GM12878 (cell line): ENCODE measurements at regions of chr2 and their contacts with region 1.

Region 1: GRCh38 chr2:64523666-64524603 is at the start of gene AFTPH:
- DNase-seq: peak; percentile 98
- ATAC-seq: peak; percentile 86
- H3K4me3 ChIP-seq: peak within 1 kb of the TSS; percentile 95
- H3K27ac ChIP-seq: peak within 1 kb of the TSS; percentile 94
- H3K4me1 ChIP-seq: peaks cover 11% of the 10 kb centered on the region
- H3K27me3 ChIP-seq: no peaks in the 10 kb centered on the region
- CTCF ChIP-seq: no peak
- EP300 ChIP-seq: peak in 1 of 2 experiments; percentile 53; a peak in 2 of 4 replicates
- POLR2A ChIP-seq: peak; percentile 84
- RAD21 ChIP-seq: no peak
- polyA plus RNA-seq, gene AFTPH: 25.6 to 38.7 TPM

Region 2: DNA sequence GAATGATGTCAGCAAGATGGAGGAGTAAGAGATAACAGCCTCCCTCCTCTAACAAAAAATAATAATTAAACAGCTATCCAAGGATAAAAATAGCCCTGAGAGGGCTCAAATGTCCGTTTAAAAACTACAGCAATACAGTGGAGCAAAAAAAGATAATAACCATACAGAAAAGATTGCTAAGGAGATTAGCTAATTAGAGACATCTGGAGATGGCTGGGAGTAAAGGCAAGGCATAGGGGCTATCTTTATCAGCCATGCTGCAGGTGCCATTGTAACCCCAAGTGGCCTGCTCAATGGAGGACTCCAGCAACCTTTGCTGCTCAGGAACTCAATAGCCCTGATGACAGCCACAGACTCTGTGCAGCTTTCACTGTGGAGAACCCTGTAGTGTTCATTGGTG is 892.4 kb before region 1 on chr2:
- CTCF ChIA-PET with region 1: no interaction called
- POLR2A ChIA-PET with region 1: no interaction called
- RAD21 ChIA-PET with region 1: no interaction called
- SMC1A ChIA-PET with region 1: no interaction called
- in situ Hi-C with region 1: no loop called
- intact Hi-C with region 1: no loop called
- DNase-seq: no peak
- ATAC-seq: no peak
- H3K4me3 ChIP-seq: no peak overlapping the region
- H3K27ac ChIP-seq: no peak overlapping the region
- H3K4me1 ChIP-seq: peaks cover 3% of the 10 kb centered on the region; the same call in 1 of the 2 replicates
- H3K27me3 ChIP-seq: no peaks in the 10 kb centered on the region
- CTCF ChIP-seq: no peak
- EP300 ChIP-seq: no peak
- POLR2A ChIP-seq: no peak
- RAD21 ChIP-seq: no peak

Region 3: GRCh38 chr2:64052468-64053241 is 471.3 kb before region 1 on chr2:
- CTCF ChIA-PET with region 1: interaction called, 10 read pairs
- POLR2A ChIA-PET with region 1: no interaction called
- RAD21 ChIA-PET with region 1: interaction called, 7 read pairs
- SMC1A ChIA-PET with region 1: interaction called, 5 read pairs
- in situ Hi-C with region 1: no loop called
- intact Hi-C with region 1: no loop called
- DNase-seq: no peak
- ATAC-seq: no peak
- H3K4me3 ChIP-seq: no peak overlapping the region
- H3K27ac ChIP-seq: no peak overlapping the region
- H3K4me1 ChIP-seq: peaks cover 25% of the 10 kb centered on the region
- H3K27me3 ChIP-seq: no peaks in the 10 kb centered on the region
- CTCF ChIP-seq: no peak
- EP300 ChIP-seq: no peak
- POLR2A ChIP-seq: no peak
- RAD21 ChIP-seq: no peak

Region 4: GRCh38 chr2:64354857-64355680 is 168.9 kb before region 1 on chr2:
- CTCF ChIA-PET with region 1: no interaction called
- POLR2A ChIA-PET with region 1: no interaction called
- RAD21 ChIA-PET with region 1: no interaction called
- SMC1A ChIA-PET with region 1: no interaction called
- in situ Hi-C with region 1: no loop called
- intact Hi-C with region 1: no loop called
- DNase-seq: no peak
- ATAC-seq: no peak
- H3K4me3 ChIP-seq: no peak overlapping the region
- H3K27ac ChIP-seq: no peak overlapping the region
- H3K4me1 ChIP-seq: peaks cover 6% of the 10 kb centered on the region; the same call in 1 of the 2 replicates
- H3K27me3 ChIP-seq: no peaks in the 10 kb centered on the region; a peak in 1 of 4 replicates
- CTCF ChIP-seq: no peak
- EP300 ChIP-seq: no peak
- POLR2A ChIP-seq: no peak
- RAD21 ChIP-seq: no peak

Region 5: GRCh38 chr2:64554117-64554516 is 30.2 kb after region 1 on chr2:
- CTCF ChIA-PET with region 1: interaction called, 145 read pairs
- POLR2A ChIA-PET with region 1: interaction called, 6 read pairs
- RAD21 ChIA-PET with region 1: interaction called, 93 read pairs
- SMC1A ChIA-PET with region 1: interaction called, 106 read pairs
- in situ Hi-C with region 1: no loop called
- intact Hi-C with region 1: no loop called
- DNase-seq: no peak
- ATAC-seq: peak; percentile 61
- H3K4me3 ChIP-seq: no peak overlapping the region
- H3K27ac ChIP-seq: no peak overlapping the region
- H3K4me1 ChIP-seq: peaks cover 5% of the 10 kb centered on the region
- H3K27me3 ChIP-seq: no peaks in the 10 kb centered on the region
- CTCF ChIP-seq: no peak
- EP300 ChIP-seq: no peak
- POLR2A ChIP-seq: no peak
- RAD21 ChIP-seq: no peak

Region 6: GRCh38 chr2:64595397-64596160 is 71.6 kb after region 1 on chr2:
- CTCF ChIA-PET with region 1: interaction called, 13 read pairs
- POLR2A ChIA-PET with region 1: no interaction called
- RAD21 ChIA-PET with region 1: interaction called, 13 read pairs
- SMC1A ChIA-PET with region 1: interaction called, 22 read pairs
- in situ Hi-C with region 1: no loop called
- intact Hi-C with region 1: no loop called
- DNase-seq: no peak
- ATAC-seq: no peak
- H3K4me3 ChIP-seq: no peak overlapping the region
- H3K27ac ChIP-seq: no peak overlapping the region
- H3K4me1 ChIP-seq: peaks cover 6% of the 10 kb centered on the region; the same call in 1 of the 2 replicates
- H3K27me3 ChIP-seq: no peaks in the 10 kb centered on the region
- CTCF ChIP-seq: peak in 1 of 3 experiments; percentile 34; a peak in 2 of 6 replicates
- EP300 ChIP-seq: no peak
- POLR2A ChIP-seq: no peak
- RAD21 ChIP-seq: no peak; the same call in 1 of the 2 replicates

Region 7: DNA sequence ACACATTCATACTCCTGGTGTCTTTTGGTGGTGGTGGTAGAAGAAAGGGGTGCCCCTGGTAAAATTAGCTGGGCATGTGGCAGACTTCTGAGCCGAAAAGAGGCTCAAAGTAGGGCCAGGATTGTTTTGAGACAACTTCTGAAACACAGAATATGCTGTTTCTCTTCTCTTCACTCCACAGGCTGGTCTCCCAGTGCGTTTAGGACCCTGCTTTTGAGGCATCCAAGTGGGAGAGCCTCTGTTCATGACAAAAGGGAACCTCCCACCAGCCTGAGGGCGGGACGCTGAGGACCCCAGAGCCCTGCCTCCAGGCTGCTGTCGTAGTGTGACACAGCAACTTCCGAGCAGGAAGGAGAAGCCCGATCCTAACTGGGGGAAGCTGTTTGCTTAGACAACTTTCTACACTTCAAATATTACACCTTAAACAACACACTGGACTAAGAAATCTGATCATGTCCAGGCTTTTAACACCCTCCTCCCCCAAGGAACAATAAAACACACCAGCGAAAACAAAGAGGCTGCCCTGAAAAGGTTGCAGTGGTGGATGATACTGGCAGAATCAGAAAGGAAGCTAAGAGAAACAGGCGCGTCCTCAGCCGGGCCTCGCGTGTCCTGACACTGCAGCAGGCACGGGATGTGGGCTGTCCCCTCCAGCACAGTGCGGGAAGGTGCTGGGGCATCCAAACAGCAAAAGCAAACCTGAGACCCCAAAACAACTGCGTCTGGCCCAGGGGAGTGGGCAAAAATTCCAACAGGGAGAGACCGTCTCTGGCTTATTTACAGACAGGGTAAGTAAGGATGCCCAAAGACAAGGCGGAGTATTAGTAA is 120.5 kb after region 1 on chr2:
- CTCF ChIA-PET with region 1: interaction called, 37 read pairs
- POLR2A ChIA-PET with region 1: interaction called, 17 read pairs
- RAD21 ChIA-PET with region 1: interaction called, 75 read pairs
- SMC1A ChIA-PET with region 1: interaction called, 30 read pairs
- in situ Hi-C with region 1: no loop called
- intact Hi-C with region 1: no loop called
- DNase-seq: no peak
- ATAC-seq: peak; percentile 76
- H3K4me3 ChIP-seq: peak overlapping the region; percentile 87
- H3K27ac ChIP-seq: peak overlapping the region; percentile 95
- H3K4me1 ChIP-seq: peaks cover 46% of the 10 kb centered on the region
- H3K27me3 ChIP-seq: no peaks in the 10 kb centered on the region
- CTCF ChIP-seq: no peak
- EP300 ChIP-seq: no peak; a peak in 1 of 4 replicates
- POLR2A ChIP-seq: peak; percentile 74
- RAD21 ChIP-seq: no peak

Region 8: DNA sequence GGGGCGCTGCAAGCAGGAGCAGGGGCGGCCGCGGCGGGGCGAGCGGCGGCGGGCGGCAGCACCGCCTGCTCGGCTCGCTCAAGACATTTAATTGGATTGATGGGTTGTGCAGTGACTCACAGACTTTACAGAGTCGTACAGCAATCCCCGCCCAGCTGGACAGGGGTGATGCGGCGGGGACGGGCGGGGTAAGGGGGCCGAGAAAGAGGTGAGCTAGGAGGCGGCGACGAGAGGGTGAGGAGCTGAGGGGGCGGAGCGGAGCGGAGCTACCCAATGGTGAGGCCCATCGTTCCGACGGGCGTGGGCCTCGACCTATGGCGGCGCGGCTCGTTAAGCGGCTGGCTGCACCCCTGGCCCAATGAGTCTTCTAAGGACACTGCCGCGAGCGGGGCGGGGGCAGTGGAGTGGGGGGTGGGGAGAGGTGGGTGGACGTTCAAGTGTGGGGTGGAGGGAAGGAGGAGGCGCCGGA is 226.9 kb after region 1 on chr2:
- CTCF ChIA-PET with region 1: interaction called, 3 read pairs
- POLR2A ChIA-PET with region 1: interaction called, 3 read pairs
- RAD21 ChIA-PET with region 1: interaction called, 7 read pairs
- SMC1A ChIA-PET with region 1: interaction called, 3 read pairs
- in situ Hi-C with region 1: no loop called
- intact Hi-C with region 1: loop called (anchors 5 kb)
- DNase-seq: peak; percentile 99
- ATAC-seq: peak; percentile 89
- H3K4me3 ChIP-seq: peak overlapping the region; percentile 98
- H3K27ac ChIP-seq: peak overlapping the region; percentile 92
- H3K4me1 ChIP-seq: 0 out of 2 replicates have a peak, but pooled peaks cover 3% of the 10 kb centered on the region
- H3K27me3 ChIP-seq: no peaks in the 10 kb centered on the region
- CTCF ChIP-seq: no peak; a peak in 2 of 6 replicates
- EP300 ChIP-seq: no peak; a peak in 1 of 4 replicates
- POLR2A ChIP-seq: peak; percentile 92
- RAD21 ChIP-seq: peak; percentile 31; the same call in 1 of the 2 replicates

Region 9: GRCh38 chr2:64873472-64873924 is 349.6 kb after region 1 on chr2:
- CTCF ChIA-PET with region 1: interaction called, 30 read pairs
- POLR2A ChIA-PET with region 1: no interaction called
- RAD21 ChIA-PET with region 1: interaction called, 17 read pairs
- SMC1A ChIA-PET with region 1: interaction called, 6 read pairs
- in situ Hi-C with region 1: no loop called
- intact Hi-C with region 1: loop called (anchors 1 kb)
- DNase-seq: no peak
- ATAC-seq: peak; percentile 98
- H3K4me3 ChIP-seq: peak overlapping the region; percentile 23; the same call in 1 of the 2 replicates
- H3K27ac ChIP-seq: no peak overlapping the region
- H3K4me1 ChIP-seq: peaks cover 9% of the 10 kb centered on the region
- H3K27me3 ChIP-seq: no peaks in the 10 kb centered on the region
- CTCF ChIP-seq: peak; percentile 94 to 99 (median 98)
- EP300 ChIP-seq: no peak
- POLR2A ChIP-seq: no peak
- RAD21 ChIP-seq: peak; percentile 89